ENCODE measurements at regions of chr6 and their contacts with region 1.

Region 1: GRCh38 chr6:18155150-18155863 is at the start of gene KDM1B:
- DNase-seq: peak; percentile 98 to 99
- ATAC-seq: peak; percentile 87 to 93
- H3K4me3 ChIP-seq: peak within 1 kb of the TSS; percentile 84 to 95 (median 86)
- H3K27ac ChIP-seq: peak within 1 kb of the TSS; percentile 82 to 94 (median 92)
- H3K4me1 ChIP-seq: peaks cover 14 to 19% of the 10 kb centered on the region in 2 donors
- H3K27me3 ChIP-seq: no peaks in the 10 kb centered on the region
- CTCF ChIP-seq: no peak
- POLR2A ChIP-seq: peak; percentile 91 to 94
- total RNA-seq, gene KDM1B: 14.5 to 29.9 (median 26.0) TPM

Region 2: DNA sequence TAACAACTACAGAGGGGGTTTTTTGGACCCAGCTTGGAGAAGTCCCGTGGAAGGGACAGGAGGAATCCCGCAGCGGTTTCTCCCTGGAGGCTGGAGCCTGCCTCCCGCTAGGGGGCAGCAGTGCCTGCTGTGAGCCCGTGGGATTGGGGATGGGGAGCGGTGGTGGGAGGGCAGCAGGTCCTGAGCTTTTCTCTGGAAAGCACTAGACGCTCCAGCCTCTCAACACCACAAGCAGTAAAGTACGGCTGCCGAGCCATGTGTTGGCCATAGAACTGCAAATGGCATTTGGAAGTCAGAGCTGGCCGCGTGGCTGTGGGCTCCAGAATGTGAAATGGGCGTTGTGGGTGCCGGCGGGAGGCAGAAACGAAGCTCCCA is 1869.2 kb before region 1 on chr6:
- in situ Hi-C with region 1: no loop called
- intact Hi-C with region 1: loop called (anchors 5 kb)
- DNase-seq: peak in 1 of 2 donors; percentile 45
- ATAC-seq: peak; percentile 7 to 10
- H3K4me3 ChIP-seq: no peak overlapping the region
- H3K27ac ChIP-seq: peak overlapping the region; percentile 91 to 99 (median 98)
- H3K4me1 ChIP-seq: peaks cover 23 to 26% of the 10 kb centered on the region in 2 donors
- H3K27me3 ChIP-seq: no peaks in the 10 kb centered on the region
- CTCF ChIP-seq: peak; percentile 30 to 78 (median 72)
- POLR2A ChIP-seq: no peak

Region 3: DNA sequence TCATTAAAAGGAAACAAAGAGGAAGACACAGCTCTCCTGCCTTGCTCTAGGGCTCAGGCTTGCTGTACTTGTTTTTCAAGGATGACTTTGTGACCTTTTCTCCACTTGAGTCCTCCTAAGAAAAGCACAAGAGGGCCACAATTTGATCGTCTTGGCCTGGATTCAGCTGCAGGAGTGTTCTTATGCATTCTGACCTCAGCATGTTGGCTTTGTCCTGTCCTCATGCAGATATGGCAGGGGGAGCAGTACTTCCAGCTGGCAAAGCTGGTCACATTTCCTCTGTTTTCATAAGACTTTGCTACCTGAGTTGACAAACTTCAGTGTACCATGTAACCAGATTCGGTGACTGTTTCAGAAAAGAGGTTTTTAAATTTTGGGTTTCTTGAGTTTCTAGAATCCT is 30.7 kb after region 1 on chr6:
- in situ Hi-C with region 1: no loop called
- intact Hi-C with region 1: no loop called
- DNase-seq: no peak
- ATAC-seq: no peak
- H3K4me3 ChIP-seq: no peak overlapping the region
- H3K27ac ChIP-seq: no peak overlapping the region
- H3K4me1 ChIP-seq: no peaks in the 10 kb centered on the region
- H3K27me3 ChIP-seq: no peaks in the 10 kb centered on the region
- CTCF ChIP-seq: no peak
- POLR2A ChIP-seq: no peak

Region 4: DNA sequence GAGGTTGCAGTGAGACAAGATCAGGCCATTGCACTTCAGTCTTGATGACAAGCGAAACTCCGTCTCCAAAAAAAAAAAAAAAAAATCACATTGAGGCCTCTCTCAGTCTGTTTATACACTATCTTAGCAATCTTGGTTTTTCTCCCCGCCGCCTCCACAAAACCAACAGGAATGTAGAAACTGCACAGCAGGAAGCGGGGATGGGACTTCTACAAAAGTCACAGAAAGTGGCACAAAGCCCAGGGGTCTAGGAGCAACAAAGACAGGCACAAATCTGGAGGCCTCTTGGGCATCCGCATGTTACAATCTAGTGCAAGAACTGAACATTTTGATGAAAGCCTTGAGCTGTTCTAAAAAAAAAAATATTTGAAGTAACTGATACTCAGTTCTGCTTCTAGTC is 48.5 kb after region 1 on chr6:
- in situ Hi-C with region 1: no loop called
- intact Hi-C with region 1: no loop called
- DNase-seq: no peak
- ATAC-seq: no peak
- H3K4me3 ChIP-seq: no peak overlapping the region
- H3K27ac ChIP-seq: no peak overlapping the region
- H3K4me1 ChIP-seq: no peaks in the 10 kb centered on the region
- H3K27me3 ChIP-seq: no peaks in the 10 kb centered on the region
- CTCF ChIP-seq: no peak
- POLR2A ChIP-seq: no peak

Region 5: DNA sequence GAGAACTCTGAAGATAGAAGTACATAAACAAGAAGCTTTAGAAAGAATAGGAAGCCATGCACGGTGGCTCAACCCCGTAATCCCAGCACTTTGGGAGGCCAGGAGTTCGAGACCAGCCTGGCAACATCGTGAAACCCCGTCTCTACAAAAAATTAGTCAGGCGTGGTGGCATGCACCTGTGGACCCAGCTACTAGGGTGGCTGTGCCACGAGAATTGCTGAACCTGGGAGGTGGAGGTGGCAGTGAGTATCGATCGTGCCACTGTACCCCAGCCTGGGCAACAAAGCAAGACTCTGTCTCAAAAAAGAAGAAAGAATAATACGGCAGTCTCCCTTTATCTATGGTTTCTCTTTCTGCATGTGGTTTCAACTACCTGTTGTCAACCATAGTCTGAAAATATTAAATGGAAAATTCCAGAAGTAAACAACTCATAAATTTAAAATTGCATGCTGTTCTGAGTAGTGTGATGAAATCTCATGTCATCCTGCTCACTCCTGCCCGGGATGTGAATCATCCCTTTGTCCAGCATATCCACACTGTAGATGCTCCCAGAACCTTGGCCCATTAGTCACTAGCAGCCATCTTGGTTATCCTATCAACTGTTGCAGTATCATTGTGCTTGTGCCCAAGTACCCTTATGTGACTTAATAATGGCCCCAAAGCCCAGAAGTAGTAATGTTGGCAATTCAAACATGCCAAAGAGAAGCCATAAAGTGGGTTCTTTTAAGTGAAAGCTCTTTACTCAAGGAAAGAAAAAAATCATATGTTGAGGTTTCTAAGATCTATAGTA is 87.0 kb after region 1 on chr6:
- in situ Hi-C with region 1: no loop called
- intact Hi-C with region 1: no loop called
- DNase-seq: peak in 1 of 2 donors; percentile 44
- ATAC-seq: peak; percentile 33 to 92
- H3K4me3 ChIP-seq: no peak overlapping the region
- H3K27ac ChIP-seq: peak overlapping the region in 2 of 4 donors; percentile 16 to 20
- H3K4me1 ChIP-seq: peaks cover 0 to 5% of the 10 kb centered on the region in 2 donors
- H3K27me3 ChIP-seq: no peaks in the 10 kb centered on the region
- CTCF ChIP-seq: no peak
- POLR2A ChIP-seq: no peak

Region 6: DNA sequence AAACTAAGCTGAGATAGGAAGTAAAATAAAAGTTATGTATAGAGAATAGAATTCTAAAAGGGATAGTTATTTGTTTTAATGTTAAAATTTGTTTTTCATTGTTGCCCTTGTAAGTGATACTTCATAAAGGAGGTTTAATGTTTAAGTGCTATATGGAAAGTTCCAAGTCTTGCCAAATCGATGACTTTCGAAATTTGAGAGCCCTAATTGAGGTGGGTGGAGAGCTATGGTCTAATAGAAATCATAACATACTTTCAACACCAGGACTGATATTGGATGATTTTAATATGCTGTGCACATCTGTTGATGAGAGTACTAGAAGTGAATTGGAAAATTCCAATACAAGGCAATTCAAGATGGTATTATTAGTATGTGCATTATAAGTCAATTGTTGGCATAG is 296.4 kb after region 1 on chr6:
- in situ Hi-C with region 1: no loop called
- intact Hi-C with region 1: no loop called
- DNase-seq: no peak
- ATAC-seq: no peak
- H3K4me3 ChIP-seq: no peak overlapping the region
- H3K27ac ChIP-seq: peak overlapping the region; percentile 22 to 88 (median 65)
- H3K4me1 ChIP-seq: peaks cover 52 to 60% of the 10 kb centered on the region in 2 donors
- H3K27me3 ChIP-seq: no peaks in the 10 kb centered on the region
- CTCF ChIP-seq: no peak
- POLR2A ChIP-seq: no peak